ENCODE measurements at regions of chr22 and their contacts with region 1.

Region 1: GRCh38 chr22:31313366-31314147 is 21.3 kb upstream of the PIK3IP1 start:
- DNase-seq: peak; percentile 82
- ATAC-seq: peak; percentile 88
- H3K4me3 Mint-ChIP-seq: no peak overlapping the region
- H3K27ac Mint-ChIP-seq: no peak overlapping the region
- H3K4me1 Mint-ChIP-seq: peaks cover 22% of the 10 kb centered on the region
- H3K27me3 Mint-ChIP-seq: no peaks in the 10 kb centered on the region

Region 2: DNA sequence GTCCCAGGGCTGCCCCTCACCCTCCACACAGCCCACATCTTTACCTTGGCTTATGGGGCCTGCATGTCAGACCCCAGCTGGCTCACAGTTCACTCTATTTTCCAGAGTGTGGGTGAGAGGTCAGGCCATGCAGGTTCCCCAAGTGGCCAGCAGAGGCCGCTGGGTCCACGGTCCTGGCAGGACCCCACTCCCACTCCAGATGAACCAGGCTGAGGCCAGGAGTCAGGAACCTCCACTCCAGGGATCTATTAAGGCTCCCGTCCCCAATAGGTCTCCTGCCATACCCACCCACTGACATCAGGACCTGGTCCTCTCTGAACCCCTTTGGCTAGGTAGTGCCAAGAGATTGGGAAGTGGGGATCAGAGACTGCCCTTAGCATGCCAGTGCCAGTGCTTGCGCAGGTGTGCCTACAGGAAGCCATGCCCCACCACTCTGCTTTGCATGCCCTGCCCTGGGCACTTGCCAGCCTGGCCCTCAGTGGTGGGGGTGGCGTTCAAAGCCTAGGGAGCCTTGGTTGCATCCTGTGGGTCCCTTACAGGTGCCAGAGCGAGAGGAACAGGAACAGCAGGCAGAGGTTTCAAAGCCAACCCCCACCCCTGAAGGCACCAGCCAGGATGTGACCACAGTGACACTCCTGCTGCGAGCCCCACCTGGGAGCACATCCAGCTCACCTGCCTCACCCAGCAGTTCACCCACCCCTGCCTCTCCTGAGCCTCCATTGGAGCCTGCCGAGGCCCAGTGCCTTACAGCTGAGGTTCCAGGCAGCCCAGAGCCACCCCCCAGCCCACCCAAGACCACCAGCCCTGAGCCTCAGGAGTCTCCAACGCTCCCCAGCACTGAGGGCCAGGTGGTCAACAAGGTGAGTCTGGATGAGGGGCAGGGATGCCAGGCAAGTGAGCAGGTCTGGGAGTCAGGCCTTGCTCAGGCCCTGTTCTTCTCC is 224.1 kb before region 1 on chr22:
- CTCF ChIA-PET with region 1: no interaction called
- POLR2A ChIA-PET with region 1: no interaction called
- intact Hi-C with region 1: loop called in 1 of 2 experiments (anchors 1 kb)
- DNase-seq: peak; percentile 60
- ATAC-seq: no peak
- H3K4me3 Mint-ChIP-seq: no peak overlapping the region
- H3K27ac Mint-ChIP-seq: no peak overlapping the region
- H3K4me1 Mint-ChIP-seq: peaks cover 1% of the 10 kb centered on the region
- H3K27me3 Mint-ChIP-seq: no peaks in the 10 kb centered on the region

Region 3: DNA sequence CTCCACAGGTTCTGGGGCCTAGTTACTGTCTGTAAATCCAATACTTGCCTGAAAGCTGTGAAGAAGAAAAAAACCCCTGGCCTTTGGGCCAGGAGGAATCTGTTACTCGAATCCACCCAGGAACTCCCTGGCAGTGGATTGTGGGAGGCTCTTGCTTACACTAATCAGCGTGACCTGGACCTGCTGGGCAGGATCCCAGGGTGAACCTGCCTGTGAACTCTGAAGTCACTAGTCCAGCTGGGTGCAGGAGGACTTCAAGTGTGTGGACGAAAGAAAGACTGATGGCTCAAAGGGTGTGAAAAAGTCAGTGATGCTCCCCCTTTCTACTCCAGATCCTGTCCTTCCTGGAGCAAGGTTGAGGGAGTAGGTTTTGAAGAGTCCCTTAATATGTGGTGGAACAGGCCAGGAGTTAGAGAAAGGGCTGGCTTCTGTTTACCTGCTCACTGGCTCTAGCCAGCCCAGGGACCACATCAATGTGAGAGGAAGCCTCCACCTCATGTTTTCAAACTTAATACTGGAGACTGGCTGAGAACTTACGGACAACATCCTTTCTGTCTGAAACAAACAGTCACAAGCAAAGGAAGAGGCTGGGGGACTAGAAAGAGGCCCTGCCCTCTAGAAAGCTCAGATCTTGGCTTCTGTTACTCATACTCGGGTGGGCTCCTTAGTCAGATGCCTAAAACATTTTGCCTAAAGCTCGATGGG is 34.8 kb before region 1 on chr22:
- CTCF ChIA-PET with region 1: interaction called, 12 read pairs
- POLR2A ChIA-PET with region 1: no interaction called
- intact Hi-C with region 1: no loop called
- DNase-seq: peak; percentile 52
- ATAC-seq: peak; percentile 90
- H3K4me3 Mint-ChIP-seq: no peak overlapping the region
- H3K27ac Mint-ChIP-seq: peak overlapping the region; percentile 86
- H3K4me1 Mint-ChIP-seq: peaks cover 79% of the 10 kb centered on the region
- H3K27me3 Mint-ChIP-seq: no peaks in the 10 kb centered on the region

Region 4: DNA sequence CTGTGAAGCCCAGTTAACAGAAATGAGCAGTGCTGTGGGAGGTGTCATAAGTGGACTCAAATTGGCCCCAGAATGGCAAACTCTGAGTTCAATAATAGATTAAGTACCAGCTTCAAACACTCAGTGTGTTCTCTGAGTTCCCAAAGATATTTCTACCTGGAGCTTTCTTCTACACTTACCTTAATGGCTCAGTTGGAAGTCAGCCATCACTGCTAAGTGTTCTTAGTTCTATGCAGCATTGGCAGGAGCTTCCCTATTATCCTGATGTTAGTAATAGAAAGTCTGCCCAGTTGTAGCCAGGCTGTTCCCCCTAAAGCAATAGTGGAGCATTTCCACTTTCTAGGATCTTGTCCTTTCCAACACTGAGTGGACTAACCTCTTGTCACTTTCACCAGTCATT is 11.6 kb before region 1 on chr22:
- CTCF ChIA-PET with region 1: interaction called, 80 read pairs
- POLR2A ChIA-PET with region 1: no interaction called
- intact Hi-C with region 1: no loop called
- DNase-seq: no peak
- ATAC-seq: no peak
- H3K4me3 Mint-ChIP-seq: no peak overlapping the region
- H3K27ac Mint-ChIP-seq: no peak overlapping the region
- H3K4me1 Mint-ChIP-seq: peaks cover 34% of the 10 kb centered on the region
- H3K27me3 Mint-ChIP-seq: no peaks in the 10 kb centered on the region